Activated naive CD4-positive, alpha-beta T cell treated with anti-CD3 and anti-CD28 coated beads, Interleukin-2, amount 10 ng/mL, durations not matched to agents 7 days and 5 days (primary cell): ENCODE measurements at regions of chr14 and their contacts with region 1.

Region 1: DNA sequence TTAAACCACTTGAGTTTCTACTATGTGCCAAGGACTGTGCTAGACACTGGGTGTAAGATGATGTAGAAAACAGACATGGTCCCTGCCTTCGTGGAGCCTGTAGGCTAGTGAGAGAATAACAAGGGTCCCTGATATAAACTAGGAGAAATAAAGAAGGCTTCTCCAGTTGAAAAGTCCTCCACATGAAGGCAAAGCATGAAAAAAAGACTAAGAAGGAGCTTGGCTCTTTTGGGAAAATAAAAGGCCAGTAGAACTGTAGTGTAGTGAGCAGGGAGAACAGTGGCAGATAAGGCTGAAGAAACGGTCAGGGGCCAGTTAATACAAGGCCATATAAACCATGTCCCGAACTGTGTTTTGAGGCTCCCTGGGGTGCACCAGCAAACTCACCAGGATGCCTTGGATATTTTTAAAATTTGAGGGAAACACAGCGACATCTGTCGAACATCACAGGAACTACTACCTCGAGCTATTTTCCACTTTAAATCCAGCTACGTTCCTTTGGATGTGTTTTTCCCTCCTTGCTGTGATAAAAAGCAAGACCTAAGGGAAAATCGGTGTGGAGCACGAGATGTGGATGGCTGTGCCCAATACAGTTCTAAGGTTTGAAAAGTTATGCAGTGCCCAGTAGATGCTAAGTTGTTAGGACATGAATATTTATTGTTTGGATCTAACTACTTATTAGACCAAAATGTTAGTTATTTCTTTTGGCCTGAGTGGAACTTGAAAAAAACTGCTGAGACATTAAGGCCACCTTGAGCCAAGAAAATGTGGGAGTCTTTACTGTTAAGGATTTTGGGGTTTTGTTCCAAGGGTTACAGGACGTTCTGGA is 8.5 kb upstream of the CFL2 start:
- DNase-seq: peak; percentile 46
- H3K4me3 Mint-ChIP-seq: no peak overlapping the region
- H3K27ac Mint-ChIP-seq: no peak overlapping the region
- H3K4me1 Mint-ChIP-seq: no peaks in the 10 kb centered on the region
- H3K27me3 Mint-ChIP-seq: peaks cover 5% of the 10 kb centered on the region

Region 2: GRCh38 chr14:34671716-34672115 is 51.2 kb before region 1 on chr14:
- CTCF ChIA-PET with region 1: interaction called, 66 read pairs
- DNase-seq: no peak
- H3K4me3 Mint-ChIP-seq: no peak overlapping the region
- H3K27ac Mint-ChIP-seq: no peak overlapping the region
- H3K4me1 Mint-ChIP-seq: no peaks in the 10 kb centered on the region
- H3K27me3 Mint-ChIP-seq: no peaks in the 10 kb centered on the region

Region 3: DNA sequence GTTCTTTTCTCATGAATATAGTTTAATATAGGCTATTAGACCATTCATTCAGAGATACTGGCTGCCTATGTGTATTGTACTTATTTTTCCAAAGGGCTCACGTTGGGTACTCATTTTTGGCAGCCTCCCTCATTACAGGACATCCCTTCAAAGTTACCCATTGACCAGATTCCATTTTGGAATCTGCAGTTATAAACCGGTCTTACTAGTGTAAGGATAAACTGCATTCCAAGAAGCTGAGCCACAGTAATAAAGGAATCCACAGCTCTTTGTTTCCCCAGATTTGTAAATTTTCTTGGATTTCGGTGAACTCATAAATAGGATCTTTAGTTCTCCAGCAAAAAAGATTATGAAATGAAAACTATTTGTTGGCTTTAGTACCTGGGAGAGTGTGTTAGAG is 10.3 kb after region 1 on chr14:
- CTCF ChIA-PET with region 1: interaction called, 13 read pairs
- DNase-seq: no peak
- H3K4me3 Mint-ChIP-seq: no peak overlapping the region
- H3K27ac Mint-ChIP-seq: no peak overlapping the region
- H3K4me1 Mint-ChIP-seq: no peaks in the 10 kb centered on the region
- H3K27me3 Mint-ChIP-seq: peaks cover 9% of the 10 kb centered on the region